HepG2 (cell line): ENCODE measurements at regions of chr6 and their contacts with region 1.

Region 1: DNA sequence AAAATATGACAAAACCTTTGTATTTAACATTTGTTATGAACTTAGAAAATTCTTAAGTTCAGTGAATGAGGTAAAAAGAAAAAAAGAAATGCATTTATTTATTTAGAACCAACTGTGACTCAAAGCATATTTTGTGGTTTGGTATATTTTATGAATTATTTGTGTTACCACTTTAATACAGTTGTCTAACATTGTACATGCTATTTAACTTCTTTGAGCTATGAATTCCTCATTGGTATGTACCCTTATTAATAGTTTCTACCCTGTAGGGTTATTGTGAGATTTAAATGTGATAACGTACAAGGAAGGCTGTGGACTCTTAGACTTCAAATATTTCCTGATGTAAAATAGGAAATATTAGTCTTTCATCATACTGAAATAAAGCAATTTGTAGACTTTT is 162.6 kb downstream of the MMUT start:
- DNase-seq: no peak
- ATAC-seq: no peak
- H3K4me3 ChIP-seq: no peak overlapping the region
- H3K27ac ChIP-seq: no peak overlapping the region
- H3K4me1 ChIP-seq: no peaks in the 10 kb centered on the region
- H3K27me3 ChIP-seq: no peaks in the 10 kb centered on the region
- CTCF ChIP-seq: no peak
- EP300 ChIP-seq: no peak
- POLR2A ChIP-seq: no peak
- RAD21 ChIP-seq: no peak

Region 2: GRCh38 chr6:49264909-49265308 is 35.5 kb before region 1 on chr6:
- CTCF ChIA-PET with region 1: no interaction called
- POLR2A ChIA-PET with region 1: no interaction called
- in situ Hi-C with region 1: no loop called
- intact Hi-C with region 1: loop called (anchors 1 kb)
- DNase-seq: no peak
- ATAC-seq: peak; percentile 81
- H3K4me3 ChIP-seq: peak overlapping the region in 1 of 3 experiments; percentile 36; a peak in 1 of 6 replicates
- H3K27ac ChIP-seq: no peak overlapping the region
- H3K4me1 ChIP-seq: peaks cover 6% of the 10 kb centered on the region; the same call in 1 of the 2 replicates
- H3K27me3 ChIP-seq: peaks cover 0 to 2% of the 10 kb centered on the region in 2 experiments; a peak in 1 of 5 replicates
- CTCF ChIP-seq: no peak
- EP300 ChIP-seq: no peak
- POLR2A ChIP-seq: no peak
- RAD21 ChIP-seq: no peak

Region 3: DNA sequence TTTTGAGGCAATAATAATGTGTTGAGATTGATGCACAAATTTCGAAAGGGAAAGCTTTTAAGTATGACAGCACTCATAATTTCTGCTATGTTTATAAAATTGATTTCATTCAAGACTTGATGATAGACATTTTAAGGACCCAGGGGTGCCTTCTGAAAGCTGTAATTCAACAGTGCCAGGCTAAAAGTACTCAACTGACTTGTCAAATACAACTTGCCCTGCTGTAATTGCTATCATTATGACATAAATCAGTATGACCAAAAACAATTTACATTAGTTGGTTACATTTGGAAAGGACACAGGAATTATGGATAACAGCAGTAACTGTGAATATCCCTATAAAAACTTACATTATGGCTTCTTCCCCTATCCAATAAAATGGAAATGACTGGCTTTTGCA is 16.3 kb before region 1 on chr6:
- CTCF ChIA-PET with region 1: no interaction called
- POLR2A ChIA-PET with region 1: no interaction called
- in situ Hi-C with region 1: no loop called
- intact Hi-C with region 1: no loop called
- DNase-seq: no peak
- ATAC-seq: no peak
- H3K4me3 ChIP-seq: no peak overlapping the region
- H3K27ac ChIP-seq: no peak overlapping the region
- H3K4me1 ChIP-seq: no peaks in the 10 kb centered on the region
- H3K27me3 ChIP-seq: no peaks in the 10 kb centered on the region
- CTCF ChIP-seq: no peak
- EP300 ChIP-seq: no peak
- POLR2A ChIP-seq: no peak
- RAD21 ChIP-seq: no peak

Region 4: GRCh38 chr6:49336514-49337131 is 36.2 kb after region 1 on chr6:
- CTCF ChIA-PET with region 1: no interaction called
- POLR2A ChIA-PET with region 1: no interaction called
- in situ Hi-C with region 1: no loop called
- intact Hi-C with region 1: no loop called
- DNase-seq: no peak
- ATAC-seq: no peak
- H3K4me3 ChIP-seq: no peak overlapping the region
- H3K27ac ChIP-seq: no peak overlapping the region
- H3K4me1 ChIP-seq: no peaks in the 10 kb centered on the region
- H3K27me3 ChIP-seq: no peaks in the 10 kb centered on the region
- CTCF ChIP-seq: no peak
- EP300 ChIP-seq: no peak
- POLR2A ChIP-seq: no peak
- RAD21 ChIP-seq: no peak